ENCODE measurements at regions of chr2 and their contacts with region 1.

Region 1: GRCh38 chr2:143034292-143035074 is 94.7 kb upstream of the ARHGAP15 start:
- DNase-seq: peak; percentile 80
- H3K4me3 ChIP-seq: no peak overlapping the region
- H3K27ac ChIP-seq: no peak overlapping the region
- H3K4me1 ChIP-seq: peaks cover 2% of the 10 kb centered on the region
- H3K27me3 ChIP-seq: no peaks in the 10 kb centered on the region
- CTCF ChIP-seq: peak; percentile 66 to 94
- POLR2A ChIP-seq: no peak

Region 2: DNA sequence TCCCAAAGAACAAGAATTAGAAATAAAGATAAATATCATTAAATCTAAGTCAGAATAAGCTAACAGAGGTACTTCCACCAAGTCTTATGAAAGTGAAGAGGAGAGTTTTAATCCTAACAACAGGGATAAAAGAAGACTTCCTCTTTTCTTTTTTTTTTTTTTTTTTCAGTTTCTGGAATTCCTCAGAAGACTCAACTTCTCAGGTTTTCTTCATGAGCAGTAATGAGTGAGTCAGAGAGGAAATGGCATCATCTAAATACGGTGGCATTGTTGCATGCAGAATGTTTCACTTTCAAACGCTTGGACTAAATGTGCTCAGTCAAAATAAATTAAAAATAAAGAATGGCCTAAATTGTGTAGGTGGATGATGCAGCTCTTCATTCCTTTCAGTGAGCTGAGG is 49.2 kb after region 1 on chr2:
- CTCF ChIA-PET with region 1: interaction called, 7 read pairs
- POLR2A ChIA-PET with region 1: no interaction called
- dilution Hi-C with region 1: no loop called
- intact Hi-C with region 1: loop called (anchors 2 kb)
- DNase-seq: peak; percentile 75
- H3K4me3 ChIP-seq: peak overlapping the region in 1 of 3 experiments; percentile 28
- H3K27ac ChIP-seq: peak overlapping the region; percentile 77
- H3K4me1 ChIP-seq: peaks cover 9% of the 10 kb centered on the region
- H3K27me3 ChIP-seq: peaks cover 0 to 2% of the 10 kb centered on the region in 2 experiments
- CTCF ChIP-seq: no peak
- POLR2A ChIP-seq: no peak

Region 3: GRCh38 chr2:143162123-143162837 is 127.8 kb after region 1 on chr2:
- CTCF ChIA-PET with region 1: interaction called, 5 read pairs
- POLR2A ChIA-PET with region 1: no interaction called
- dilution Hi-C with region 1: no loop called
- intact Hi-C with region 1: loop called (anchors 2 kb)
- DNase-seq: peak; percentile 17
- H3K4me3 ChIP-seq: no peak overlapping the region
- H3K27ac ChIP-seq: no peak overlapping the region
- H3K4me1 ChIP-seq: no peaks in the 10 kb centered on the region
- H3K27me3 ChIP-seq: peaks cover 6% of the 10 kb centered on the region in 2 experiments
- CTCF ChIP-seq: peak; percentile 19 to 44
- POLR2A ChIP-seq: no peak

Region 4: DNA sequence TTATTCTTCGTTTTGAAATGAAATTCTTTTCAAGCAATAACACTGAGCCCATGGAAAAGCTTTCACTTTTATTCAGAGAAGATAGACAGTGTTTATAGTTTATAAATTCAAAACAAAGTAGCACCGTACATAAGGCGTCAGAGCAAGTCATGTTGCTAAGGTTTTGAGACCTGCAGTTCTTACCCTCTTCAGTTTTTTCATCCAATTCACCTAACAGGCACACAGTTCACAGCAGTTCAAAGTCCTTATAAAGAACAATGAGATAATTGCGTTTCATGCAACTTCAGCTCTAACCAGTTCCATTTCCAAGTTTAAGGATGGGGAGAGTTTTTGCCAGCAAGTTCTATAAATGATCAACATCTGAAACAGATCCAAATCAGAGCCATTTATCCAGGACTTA is 191.4 kb after region 1 on chr2:
- CTCF ChIA-PET with region 1: interaction called, 73 read pairs
- POLR2A ChIA-PET with region 1: no interaction called
- dilution Hi-C with region 1: no loop called
- intact Hi-C with region 1: loop called (anchors 1 kb)
- DNase-seq: no peak
- H3K4me3 ChIP-seq: no peak overlapping the region
- H3K27ac ChIP-seq: no peak overlapping the region
- H3K4me1 ChIP-seq: no peaks in the 10 kb centered on the region
- H3K27me3 ChIP-seq: no peaks in the 10 kb centered on the region
- CTCF ChIP-seq: no peak
- POLR2A ChIP-seq: no peak

Region 5: GRCh38 chr2:143259368-143259958 is 225.0 kb after region 1 on chr2:
- CTCF ChIA-PET with region 1: interaction called, 122 read pairs
- POLR2A ChIA-PET with region 1: no interaction called
- dilution Hi-C with region 1: no loop called
- intact Hi-C with region 1: loop called (anchors 1 kb)
- DNase-seq: peak; percentile 73
- H3K4me3 ChIP-seq: no peak overlapping the region
- H3K27ac ChIP-seq: no peak overlapping the region
- H3K4me1 ChIP-seq: peaks cover 12% of the 10 kb centered on the region
- H3K27me3 ChIP-seq: no peaks in the 10 kb centered on the region
- CTCF ChIP-seq: peak; percentile 63 to 68
- POLR2A ChIP-seq: no peak